Endothelial cell of umbilical vein (primary cell): ENCODE measurements at regions of chr16 and their contacts with region 1.

Region 1: GRCh38 chr16:71358464-71358998 is at the start of gene CALB2:
- DNase-seq: peak; percentile 47
- H3K4me3 ChIP-seq: no peak within 1 kb of the TSS
- H3K27ac ChIP-seq: no peak within 1 kb of the TSS
- H3K4me1 ChIP-seq: peaks cover 2% of the 10 kb centered on the region
- H3K27me3 ChIP-seq: no peaks in the 10 kb centered on the region
- CTCF ChIP-seq: peak; percentile 76 to 95
- POLR2A ChIP-seq: no peak
- total RNA-seq, gene CALB2: not detected in 2 replicates

Region 2: GRCh38 chr16:70679666-70680494 is 678.7 kb before region 1 on chr16:
- CTCF ChIA-PET with region 1: no interaction called
- POLR2A ChIA-PET with region 1: no interaction called
- dilution Hi-C with region 1: no loop called
- intact Hi-C with region 1: loop called (anchors 2 kb)
- DNase-seq: no peak
- H3K4me3 ChIP-seq: no peak overlapping the region
- H3K27ac ChIP-seq: no peak overlapping the region
- H3K4me1 ChIP-seq: peaks cover 5% of the 10 kb centered on the region
- H3K27me3 ChIP-seq: no peaks in the 10 kb centered on the region
- CTCF ChIP-seq: peak; percentile 49 to 56
- POLR2A ChIP-seq: no peak

Region 3: GRCh38 chr16:71214746-71215381 is 143.7 kb before region 1 on chr16:
- CTCF ChIA-PET with region 1: interaction called, 3 read pairs
- POLR2A ChIA-PET with region 1: no interaction called
- dilution Hi-C with region 1: no loop called
- intact Hi-C with region 1: loop called (anchors 2 kb)
- DNase-seq: peak; percentile 25
- H3K4me3 ChIP-seq: no peak overlapping the region
- H3K27ac ChIP-seq: no peak overlapping the region
- H3K4me1 ChIP-seq: no peaks in the 10 kb centered on the region
- H3K27me3 ChIP-seq: no peaks in the 10 kb centered on the region
- CTCF ChIP-seq: no peak
- POLR2A ChIP-seq: no peak